Dendritic cell treated with granulocyte-macrophage colony-stimulating factor and Interleukin-4, amounts not matched to agents 40 ng/mL and 50 ng/mL, for 4 days (primary cell): ENCODE measurements at regions of chr2 and their contacts with region 1.

Region 1: DNA sequence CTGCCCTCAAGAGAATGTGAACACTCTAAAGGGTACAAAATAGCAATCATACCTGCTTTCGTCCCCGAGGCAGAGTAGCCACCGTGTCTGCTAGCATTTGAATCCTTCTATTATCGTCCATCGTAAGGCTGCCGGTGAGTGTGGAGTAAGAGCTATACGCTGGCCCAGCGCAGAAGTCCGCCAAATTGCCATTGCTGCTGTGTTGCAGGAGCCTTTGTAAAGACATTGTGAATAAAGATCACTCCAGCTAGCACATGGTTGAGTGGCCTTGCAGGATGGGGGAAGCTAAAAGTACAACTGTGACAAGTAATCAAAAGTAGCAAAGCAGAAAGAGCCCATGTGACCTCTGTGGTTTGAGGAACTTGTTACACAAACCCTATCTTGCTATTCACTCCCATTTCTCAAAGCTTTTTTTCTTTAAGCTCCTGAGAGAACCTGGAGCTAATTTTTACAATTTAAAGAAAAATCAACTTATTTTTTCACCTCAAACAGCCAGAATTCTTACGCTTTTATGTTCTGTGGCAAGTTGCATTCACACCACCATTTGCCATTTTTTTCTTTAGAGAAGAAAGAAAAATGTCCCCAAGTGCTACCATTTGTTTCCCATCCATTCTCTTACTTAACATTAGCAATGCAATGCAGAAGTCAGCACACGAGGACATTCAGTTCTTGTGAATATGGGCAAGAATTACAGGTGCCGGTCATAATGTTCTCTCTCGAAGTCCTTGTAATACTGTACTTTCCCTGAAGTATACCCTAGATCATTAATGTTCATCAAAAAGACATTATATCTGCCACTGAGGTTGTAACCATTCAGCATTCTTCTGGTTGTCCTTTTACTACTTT is at the start of gene CYTIP:
- H3K4me3 Mint-ChIP-seq: peak within 1 kb of the TSS; percentile 84
- H3K27ac Mint-ChIP-seq: peak within 1 kb of the TSS; percentile 91
- H3K4me1 Mint-ChIP-seq: peaks cover 44% of the 10 kb centered on the region
- H3K27me3 Mint-ChIP-seq: no peaks in the 10 kb centered on the region

Region 2: GRCh38 chr2:157377861-157378260 is 66.2 kb before region 1 on chr2:
- intact Hi-C with region 1: no loop called
- H3K4me3 Mint-ChIP-seq: no peak overlapping the region
- H3K27ac Mint-ChIP-seq: no peak overlapping the region
- H3K4me1 Mint-ChIP-seq: peaks cover 9% of the 10 kb centered on the region
- H3K27me3 Mint-ChIP-seq: no peaks in the 10 kb centered on the region

Region 3: GRCh38 chr2:157420771-157421323 is 23.2 kb before region 1 on chr2:
- intact Hi-C with region 1: loop called (anchors 2 kb)
- H3K4me3 Mint-ChIP-seq: peak overlapping the region; percentile 26
- H3K27ac Mint-ChIP-seq: peak overlapping the region; percentile 94
- H3K4me1 Mint-ChIP-seq: peaks cover 43% of the 10 kb centered on the region
- H3K27me3 Mint-ChIP-seq: no peaks in the 10 kb centered on the region

Region 4: GRCh38 chr2:157468931-157469708 is 25.1 kb after region 1 on chr2:
- intact Hi-C with region 1: loop called (anchors 1 kb)
- H3K4me3 Mint-ChIP-seq: peak overlapping the region; percentile 59
- H3K27ac Mint-ChIP-seq: peak overlapping the region; percentile 96
- H3K4me1 Mint-ChIP-seq: peaks cover 37% of the 10 kb centered on the region
- H3K27me3 Mint-ChIP-seq: no peaks in the 10 kb centered on the region

Region 5: GRCh38 chr2:157784169-157784822 is 340.3 kb after region 1 on chr2:
- intact Hi-C with region 1: no loop called
- H3K4me3 Mint-ChIP-seq: no peak overlapping the region
- H3K27ac Mint-ChIP-seq: no peak overlapping the region
- H3K4me1 Mint-ChIP-seq: peaks cover 8% of the 10 kb centered on the region
- H3K27me3 Mint-ChIP-seq: no peaks in the 10 kb centered on the region